ACHN (cell line): ENCODE measurements at regions of chr13 and their contacts with region 1.

Region 1: GRCh38 chr13:29771247-29771646 is 79.2 kb downstream of the UBL3 start:
- DNase-seq: peak; percentile 51

Region 2: DNA sequence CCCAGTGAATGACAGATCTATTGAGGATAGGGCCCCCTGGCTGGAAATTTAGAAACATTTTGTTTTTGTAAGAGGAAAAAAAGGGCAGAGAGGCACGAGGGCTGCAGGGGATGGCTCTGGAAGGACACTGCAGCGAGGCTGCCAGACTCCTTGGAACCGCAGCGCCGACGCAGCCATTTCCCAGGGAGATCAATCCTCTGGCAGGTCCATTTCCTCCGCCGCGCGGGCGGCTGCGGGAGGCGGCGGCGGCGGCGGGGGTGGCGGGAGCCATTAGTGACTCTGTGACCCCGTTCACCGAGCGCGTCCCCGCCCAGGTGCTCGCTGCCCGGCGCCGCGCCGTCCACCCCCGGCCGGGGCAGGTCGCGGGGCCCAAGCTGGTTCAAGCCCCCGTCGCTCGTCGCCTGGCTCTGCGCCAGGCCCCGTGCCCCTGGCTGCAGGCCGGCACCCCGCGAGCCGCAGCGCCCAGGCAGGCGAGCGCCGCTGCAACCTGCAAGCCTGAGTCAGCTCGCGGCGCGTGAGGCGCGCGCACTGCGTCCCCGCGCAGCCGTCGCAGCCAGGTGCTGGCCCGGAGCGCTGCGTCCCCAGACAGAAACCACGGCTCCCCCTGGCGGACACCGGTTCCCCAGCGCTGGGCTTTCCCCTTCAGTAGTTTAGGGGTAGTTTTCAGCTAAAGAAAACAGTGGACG is 343.5 kb after region 1 on chr13:
- in situ Hi-C with region 1: loop called (anchors 25 kb)
- DNase-seq: peak; percentile 77